Mammary epithelial cell (primary cell): ENCODE measurements at regions of chr4 and their contacts with region 1.

Region 1: DNA sequence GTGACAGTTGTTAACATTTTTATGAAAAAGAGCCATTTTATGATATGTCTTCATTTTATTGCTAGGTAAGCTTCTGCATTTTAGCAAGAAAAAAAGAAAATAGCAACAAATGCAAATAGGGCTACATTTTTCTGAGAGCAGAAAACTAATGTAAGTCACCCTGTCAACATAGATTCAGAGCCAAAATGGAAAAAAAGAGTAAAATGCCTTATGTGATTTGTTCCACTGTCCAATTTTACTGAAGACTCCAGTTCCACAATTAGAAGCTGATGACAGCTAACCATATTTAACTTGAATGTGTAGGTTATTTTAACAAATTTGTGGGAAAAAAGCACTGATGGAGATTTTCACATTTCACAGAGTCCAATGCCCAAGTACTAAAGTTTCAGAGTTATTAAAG is 772.3 kb downstream of the FAT4 start:
- DNase-seq: no peak
- H3K4me3 ChIP-seq: no peak overlapping the region
- H3K27ac ChIP-seq: no peak overlapping the region
- H3K4me1 ChIP-seq: no peaks in the 10 kb centered on the region
- H3K27me3 ChIP-seq: no peaks in the 10 kb centered on the region
- CTCF ChIP-seq: no peak

Region 2: GRCh38 chr4:126051689-126052424 is 35.2 kb before region 1 on chr4:
- CTCF ChIA-PET with region 1: no interaction called
- dilution Hi-C with region 1: loop called (anchors 5 kb)
- in situ Hi-C with region 1: no loop called
- intact Hi-C with region 1: no loop called
- DNase-seq: peak; percentile 25
- H3K4me3 ChIP-seq: no peak overlapping the region
- H3K27ac ChIP-seq: no peak overlapping the region
- H3K4me1 ChIP-seq: no peaks in the 10 kb centered on the region
- H3K27me3 ChIP-seq: no peaks in the 10 kb centered on the region
- CTCF ChIP-seq: peak in 1 of 2 donors; percentile 19

Region 3: GRCh38 chr4:126106658-126107057 is 19.6 kb after region 1 on chr4:
- CTCF ChIA-PET with region 1: no interaction called
- dilution Hi-C with region 1: no loop called
- in situ Hi-C with region 1: no loop called
- intact Hi-C with region 1: no loop called
- DNase-seq: peak; percentile 2
- H3K4me3 ChIP-seq: no peak overlapping the region
- H3K27ac ChIP-seq: no peak overlapping the region
- H3K4me1 ChIP-seq: no peaks in the 10 kb centered on the region
- H3K27me3 ChIP-seq: no peaks in the 10 kb centered on the region
- CTCF ChIP-seq: peak; percentile 11 to 37